Right lobe of liver (tissue), 6 donors: ENCODE measurements at regions of chr11 and their contacts with region 1.

Region 1: DNA sequence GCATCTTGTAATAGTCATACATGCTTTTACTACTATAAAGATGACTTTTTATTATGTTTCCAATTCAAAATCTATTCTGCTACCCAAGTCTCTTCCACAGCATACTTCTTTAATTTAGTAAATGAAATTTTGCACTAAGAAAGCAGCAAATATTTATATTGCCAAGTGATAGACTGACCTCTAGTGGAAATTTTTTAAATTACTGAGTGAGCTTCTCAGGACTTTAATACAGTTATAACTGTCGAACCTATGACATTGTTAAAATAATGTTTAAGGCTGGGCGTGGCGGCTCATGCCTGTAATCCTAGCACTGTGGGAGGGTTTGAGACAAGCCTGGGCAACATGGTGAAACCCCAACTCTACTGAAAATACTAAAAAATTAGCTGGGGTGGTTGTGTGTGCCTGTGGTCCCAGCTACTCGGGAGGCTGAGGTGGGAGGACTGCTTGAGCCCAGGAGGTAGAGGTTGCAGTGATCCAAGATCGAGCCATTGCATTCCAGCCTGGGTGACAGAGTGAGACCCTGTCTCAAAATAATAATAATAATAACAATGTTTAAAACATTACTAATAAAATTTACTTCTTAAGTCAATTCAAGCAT is 27.3 kb downstream of the STK33 start:
- DNase-seq: no peak
- ATAC-seq: peak; percentile 54 to 67 (median 60)
- H3K4me3 ChIP-seq: no peak overlapping the region
- H3K27ac ChIP-seq: no peak overlapping the region
- H3K4me1 ChIP-seq: no peaks in the 10 kb centered on the region
- H3K27me3 ChIP-seq: no peaks in the 10 kb centered on the region
- CTCF ChIP-seq: peak; percentile 66 to 77 (median 69)
- POLR2A ChIP-seq: no peak

Region 2: DNA sequence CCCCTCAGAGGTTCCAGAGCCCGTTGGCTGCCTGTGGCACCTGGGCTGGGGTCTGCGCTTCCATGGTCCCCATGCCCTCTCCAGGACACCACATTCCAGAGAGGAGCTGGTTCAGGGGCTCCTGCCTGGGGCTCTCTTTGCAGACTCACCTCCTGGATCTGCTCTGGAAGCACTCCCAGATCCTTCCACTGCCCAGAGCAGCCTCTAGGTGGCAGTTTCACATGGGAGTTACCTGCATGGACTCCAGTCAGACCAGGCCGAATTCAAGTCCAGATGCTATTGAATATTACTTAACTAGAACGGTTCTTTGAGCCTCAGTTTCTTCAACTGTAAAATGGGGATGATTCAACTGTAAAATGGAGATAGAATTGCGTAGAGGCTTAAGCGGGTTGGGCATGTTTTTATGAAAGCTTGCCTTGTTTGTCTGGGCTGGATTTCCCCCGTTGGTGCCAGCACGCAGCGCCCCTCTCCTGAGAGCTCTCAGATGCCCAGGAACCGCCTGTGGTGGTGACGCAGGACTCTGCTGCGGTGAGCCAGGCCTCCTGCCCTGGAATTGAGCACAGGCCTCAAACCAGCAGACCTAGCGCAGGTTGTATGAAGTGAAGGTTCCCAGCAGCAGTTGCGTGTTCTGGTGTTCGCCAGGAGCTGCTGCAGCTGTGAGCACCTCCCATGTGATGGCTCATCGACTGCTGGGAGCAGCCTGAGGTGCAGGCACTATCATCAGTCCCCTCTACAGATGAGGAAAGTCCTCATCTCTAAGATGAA is 347.3 kb before region 1 on chr11:
- intact Hi-C with region 1: loop called in 1 of 2 experiments (anchors 5 kb)
- DNase-seq: peak in 2 of 3 donors; percentile 43 to 61
- ATAC-seq: peak; percentile 77 to 86 (median 83)
- H3K4me3 ChIP-seq: no peak overlapping the region
- H3K27ac ChIP-seq: no peak overlapping the region
- H3K4me1 ChIP-seq: no peaks in the 10 kb centered on the region
- H3K27me3 ChIP-seq: no peaks in the 10 kb centered on the region
- CTCF ChIP-seq: peak; percentile 45 to 74 (median 67)
- POLR2A ChIP-seq: no peak

Region 3: DNA sequence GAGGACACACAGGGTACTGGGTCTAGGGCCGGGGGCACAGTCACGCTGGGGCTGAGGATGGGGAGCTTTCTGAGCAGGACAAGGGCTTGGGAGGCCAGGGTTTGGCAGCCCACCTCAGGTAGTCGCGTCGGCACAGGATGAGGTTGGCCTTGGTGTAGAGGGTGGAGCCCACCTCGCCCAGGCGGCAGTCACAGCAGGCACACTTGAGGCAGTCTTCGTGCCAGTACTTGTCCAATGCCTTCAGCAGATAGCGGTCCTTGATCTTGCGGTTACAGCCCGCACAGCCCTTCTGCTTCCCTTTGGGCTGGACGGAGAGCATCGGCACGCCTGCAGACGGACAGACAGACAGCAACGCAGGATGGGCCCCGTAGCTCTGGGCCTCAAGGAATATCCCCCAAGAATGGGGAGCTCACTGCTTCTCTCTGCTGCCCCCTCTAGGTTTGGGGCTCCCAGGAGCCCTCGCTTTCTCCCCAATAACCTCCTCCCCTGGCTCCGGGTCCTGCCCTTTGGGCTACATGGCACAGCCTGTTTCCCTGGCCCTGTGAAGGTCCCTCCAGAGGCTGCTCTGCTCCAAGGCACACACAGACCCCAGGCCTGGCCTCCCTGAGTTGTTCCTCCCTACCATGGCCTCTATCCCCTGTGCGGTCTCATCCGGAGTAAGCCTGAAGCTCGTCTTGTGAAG is 336.4 kb before region 1 on chr11:
- intact Hi-C with region 1: no loop called
- DNase-seq: no peak
- ATAC-seq: no peak
- H3K4me3 ChIP-seq: no peak overlapping the region
- H3K27ac ChIP-seq: no peak overlapping the region
- H3K4me1 ChIP-seq: no peaks in the 10 kb centered on the region
- H3K27me3 ChIP-seq: no peaks in the 10 kb centered on the region
- CTCF ChIP-seq: no peak
- POLR2A ChIP-seq: no peak